Mammary epithelial cell (primary cell): ENCODE measurements at regions of chr9 and their contacts with region 1.

Region 1: DNA sequence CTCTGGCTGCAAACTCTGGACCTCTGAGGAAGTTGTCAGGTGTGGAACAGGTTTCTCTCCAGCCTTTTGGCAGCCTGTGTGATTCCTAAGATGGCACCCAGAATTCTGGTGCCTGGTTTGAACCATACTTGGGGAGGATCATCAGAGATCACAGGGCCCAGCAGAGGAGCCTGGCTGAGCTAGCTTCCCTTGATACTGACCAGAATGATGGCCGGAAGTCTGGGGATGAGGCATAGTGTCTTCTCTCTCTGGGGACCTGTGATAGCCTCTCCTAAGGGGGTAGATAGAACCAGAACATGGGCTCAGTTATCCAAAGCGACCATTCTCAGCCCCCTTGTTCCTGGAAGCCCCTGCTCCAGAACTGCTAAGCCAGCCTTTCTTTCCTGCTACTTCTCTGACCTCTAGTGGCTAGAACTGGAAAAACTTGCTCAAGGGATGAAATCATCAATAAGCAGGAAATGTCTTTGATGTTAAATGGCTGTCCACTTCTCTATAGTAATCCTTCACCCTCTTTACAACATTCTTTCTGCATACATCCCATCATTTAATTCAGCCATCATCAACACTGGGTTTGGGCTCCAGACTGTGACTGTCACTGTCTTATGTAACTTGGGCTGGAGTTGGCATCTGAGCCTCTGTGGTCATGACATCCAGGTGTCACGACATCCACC is 55.1 kb downstream of the C9orf152 start:
- DNase-seq: peak; percentile 45
- H3K4me3 ChIP-seq: no peak overlapping the region
- H3K27ac ChIP-seq: no peak overlapping the region
- H3K4me1 ChIP-seq: peaks cover 28% of the 10 kb centered on the region
- H3K27me3 ChIP-seq: no peaks in the 10 kb centered on the region
- CTCF ChIP-seq: peak; percentile 70 to 75

Region 2: DNA sequence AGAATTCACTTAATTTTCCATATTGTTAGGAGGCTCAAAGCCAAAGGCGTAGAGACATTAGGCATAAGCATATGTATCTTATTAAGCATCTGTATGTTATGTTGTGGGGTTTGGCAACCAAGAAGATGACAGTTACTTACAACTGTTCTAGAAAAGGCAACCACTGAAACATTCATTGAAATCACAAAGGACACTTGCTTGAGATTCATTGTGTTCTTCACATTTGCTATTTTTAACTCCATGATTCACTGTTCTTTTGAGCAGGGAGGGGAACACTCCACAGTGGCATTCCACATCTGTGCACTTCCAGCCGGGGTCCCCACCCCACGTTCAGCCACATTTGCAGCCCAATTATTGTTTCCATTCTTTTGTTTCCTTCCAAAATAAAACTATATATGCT is 265.8 kb before region 1 on chr9:
- CTCF ChIA-PET with region 1: no interaction called
- dilution Hi-C with region 1: no loop called
- in situ Hi-C with region 1: no loop called
- intact Hi-C with region 1: loop called (anchors 5 kb)
- DNase-seq: peak; percentile 40
- H3K4me3 ChIP-seq: no peak overlapping the region
- H3K27ac ChIP-seq: peak overlapping the region; percentile 31
- H3K4me1 ChIP-seq: peaks cover 44% of the 10 kb centered on the region
- H3K27me3 ChIP-seq: no peaks in the 10 kb centered on the region
- CTCF ChIP-seq: no peak

Region 3: DNA sequence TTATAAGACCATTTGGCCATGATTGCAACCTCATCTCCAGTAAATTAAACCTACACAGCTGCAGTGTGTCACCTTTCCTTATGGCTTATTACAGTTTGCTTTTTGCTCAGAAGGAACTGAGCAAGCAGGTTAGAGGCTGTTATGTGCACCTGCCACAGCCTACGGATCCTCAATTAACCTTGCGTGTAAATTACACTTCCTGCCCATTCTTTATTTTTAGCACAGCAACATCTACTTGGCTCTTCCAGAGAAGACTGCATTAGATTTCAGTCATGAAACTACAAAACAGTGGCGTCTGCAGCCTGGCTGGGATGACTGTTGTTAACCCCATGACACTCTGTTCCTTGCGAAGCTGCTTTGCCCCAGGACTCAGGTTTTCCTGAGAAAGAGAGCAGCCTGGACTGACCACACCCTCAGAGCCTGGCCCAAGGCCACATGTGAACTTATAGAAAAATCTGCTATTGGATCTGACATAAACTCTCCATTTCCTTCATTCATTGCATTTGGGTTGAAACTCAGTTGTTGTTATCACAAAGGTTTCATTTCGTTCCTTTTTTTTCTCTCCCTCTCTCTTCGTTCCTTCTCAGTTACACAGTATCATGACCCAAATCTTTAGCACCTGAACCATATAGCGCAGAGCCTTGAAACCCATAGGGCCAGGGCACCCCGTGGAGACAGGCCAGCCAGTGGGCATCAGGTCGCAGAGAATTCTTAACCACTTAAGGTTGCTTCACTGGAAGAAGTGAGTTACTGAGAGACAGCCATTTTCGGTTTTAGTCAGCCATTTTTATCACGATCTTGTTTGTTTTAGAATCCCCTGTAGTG is 234.3 kb before region 1 on chr9:
- CTCF ChIA-PET with region 1: no interaction called
- dilution Hi-C with region 1: no loop called
- in situ Hi-C with region 1: loop called in 1 of 2 experiments (anchors 5 kb)
- intact Hi-C with region 1: no loop called
- DNase-seq: no peak
- H3K4me3 ChIP-seq: no peak overlapping the region
- H3K27ac ChIP-seq: no peak overlapping the region
- H3K4me1 ChIP-seq: no peaks in the 10 kb centered on the region
- H3K27me3 ChIP-seq: no peaks in the 10 kb centered on the region
- CTCF ChIP-seq: no peak

Region 4: DNA sequence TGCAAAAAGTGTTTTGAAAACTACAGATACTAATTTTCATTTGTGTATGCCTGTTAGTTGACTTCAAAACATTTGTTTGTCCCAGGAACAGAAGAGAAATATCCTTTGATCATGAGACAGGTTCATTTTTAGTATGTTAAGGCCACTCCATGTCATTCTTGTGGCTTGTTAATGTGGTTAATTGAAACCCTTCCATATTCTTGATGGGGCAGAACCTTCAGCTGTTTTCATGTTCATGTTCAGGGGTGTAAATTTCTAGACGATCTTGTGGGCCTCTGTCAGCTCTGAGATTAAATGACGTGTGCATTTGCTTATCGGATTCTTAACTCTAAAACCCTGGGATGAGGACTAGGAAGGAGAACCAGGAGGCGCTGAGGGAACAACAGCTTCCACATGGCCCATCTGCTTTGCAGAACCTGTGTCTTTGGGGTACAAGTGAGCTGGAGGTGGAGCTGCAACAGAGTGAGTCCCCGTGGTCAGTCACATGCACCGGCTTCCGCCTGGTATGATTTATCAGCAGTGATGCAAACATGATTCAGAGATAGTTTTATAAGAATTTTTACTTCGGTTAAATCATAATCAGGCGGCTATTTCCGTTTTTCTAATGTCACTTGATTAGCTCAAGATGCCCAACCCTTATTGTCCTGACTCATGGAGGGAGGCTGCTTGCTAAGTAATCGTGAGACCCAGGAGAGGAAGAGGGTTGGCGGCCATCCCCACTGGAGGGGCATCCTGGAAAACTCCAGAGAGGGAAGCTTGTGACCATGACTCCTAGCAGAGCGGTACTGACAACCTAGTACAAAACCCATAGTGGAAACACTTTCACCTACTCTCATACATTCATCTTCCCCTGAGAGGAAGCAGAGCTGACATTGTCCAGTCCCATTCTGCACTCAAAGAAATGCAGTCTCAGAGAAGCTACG is 83.3 kb before region 1 on chr9:
- CTCF ChIA-PET with region 1: no interaction called
- dilution Hi-C with region 1: loop called (anchors 5 kb)
- in situ Hi-C with region 1: no loop called
- intact Hi-C with region 1: no loop called
- DNase-seq: peak; percentile 17
- H3K4me3 ChIP-seq: no peak overlapping the region
- H3K27ac ChIP-seq: no peak overlapping the region
- H3K4me1 ChIP-seq: peaks cover 3% of the 10 kb centered on the region
- H3K27me3 ChIP-seq: no peaks in the 10 kb centered on the region
- CTCF ChIP-seq: no peak

Region 5: DNA sequence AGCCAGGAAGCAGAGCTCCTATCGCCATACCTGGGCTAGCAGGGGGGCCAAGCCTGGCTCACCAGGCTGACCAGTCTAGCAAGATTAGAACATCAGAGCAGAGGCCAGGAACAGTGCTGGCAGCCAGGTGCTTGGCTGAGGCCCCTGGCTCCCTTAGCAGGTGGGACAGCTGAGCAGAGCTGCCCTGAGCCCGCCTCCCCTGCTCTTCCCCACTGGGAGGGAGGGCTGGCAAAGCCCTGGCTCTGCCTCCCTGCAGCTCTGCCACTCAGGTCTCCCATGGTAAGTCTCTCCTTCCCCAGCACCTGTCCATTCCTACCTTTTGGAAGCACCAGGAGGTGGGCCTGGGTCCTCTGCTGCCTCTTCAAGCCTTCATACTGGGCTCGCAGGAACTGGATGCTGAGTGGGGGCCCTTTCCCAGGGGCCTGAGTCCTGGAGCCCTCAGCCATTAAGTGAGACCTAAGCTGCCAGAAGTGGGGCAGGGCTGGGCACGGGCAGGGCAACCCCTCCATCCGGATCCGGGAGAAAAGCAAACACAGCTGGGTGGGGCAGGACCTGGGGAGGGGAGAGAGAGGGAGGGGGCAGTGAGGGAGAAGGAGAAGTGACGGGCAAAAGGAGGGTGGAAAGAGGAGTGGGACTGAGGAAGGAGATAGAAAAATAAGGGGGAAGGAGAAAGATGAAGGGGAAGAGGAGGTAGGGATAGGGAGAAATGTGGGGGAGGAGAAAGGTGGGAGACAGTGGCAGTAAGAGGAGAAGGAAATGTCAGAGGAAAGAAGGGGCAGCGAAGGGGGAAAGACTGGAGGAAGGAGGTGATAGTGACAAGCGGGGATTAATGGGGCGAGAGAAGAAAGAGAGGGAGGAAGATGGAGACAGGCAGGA is 54.5 kb after region 1 on chr9:
- CTCF ChIA-PET with region 1: no interaction called
- dilution Hi-C with region 1: no loop called
- in situ Hi-C with region 1: no loop called
- intact Hi-C with region 1: no loop called
- DNase-seq: no peak
- H3K4me3 ChIP-seq: no peak overlapping the region
- H3K27ac ChIP-seq: no peak overlapping the region
- H3K4me1 ChIP-seq: no peaks in the 10 kb centered on the region
- H3K27me3 ChIP-seq: peaks cover 3% of the 10 kb centered on the region
- CTCF ChIP-seq: no peak